K562 (cell line): ENCODE measurements at regions of chr16 and their contacts with region 1.

Region 1: GRCh38 chr16:75622761-75623605 is at the start of gene ADAT1:
- DNase-seq: peak; percentile 87 to 99 (median 91)
- ATAC-seq: peak; percentile 92
- H3K4me3 ChIP-seq: peak within 1 kb of the TSS; percentile 62
- H3K27ac ChIP-seq: peak within 1 kb of the TSS; percentile 92
- H3K4me1 ChIP-seq: peaks cover 28 to 33% of the 10 kb centered on the region in 2 experiments
- H3K27me3 ChIP-seq: no peaks in the 10 kb centered on the region
- CTCF ChIP-seq: no peak
- EP300 ChIP-seq: no peak; the same call in 1 of the 2 replicates
- POLR2A ChIP-seq: peak; percentile 92
- RAD21 ChIP-seq: no peak
- polyA plus RNA-seq, gene ADAT1: 16.0 to 20.6 TPM

Region 2: GRCh38 chr16:75471723-75472633 is 151.0 kb before region 1 on chr16:
- CTCF ChIA-PET with region 1: no interaction called
- POLR2A ChIA-PET with region 1: no interaction called
- in situ Hi-C with region 1: no loop called
- intact Hi-C with region 1: loop called (anchors 2 kb)
- DNase-seq: peak; percentile 71 to 79 (median 73)
- ATAC-seq: peak; percentile 98
- H3K4me3 ChIP-seq: no peak overlapping the region
- H3K27ac ChIP-seq: no peak overlapping the region
- H3K4me1 ChIP-seq: no peaks in the 10 kb centered on the region
- H3K27me3 ChIP-seq: peaks cover 4 to 9% of the 10 kb centered on the region in 2 experiments; a peak in 3 of 5 replicates
- CTCF ChIP-seq: peak; percentile 81 to 86 (median 86)
- EP300 ChIP-seq: no peak
- POLR2A ChIP-seq: no peak
- RAD21 ChIP-seq: peak; percentile 74 to 92

Region 3: DNA sequence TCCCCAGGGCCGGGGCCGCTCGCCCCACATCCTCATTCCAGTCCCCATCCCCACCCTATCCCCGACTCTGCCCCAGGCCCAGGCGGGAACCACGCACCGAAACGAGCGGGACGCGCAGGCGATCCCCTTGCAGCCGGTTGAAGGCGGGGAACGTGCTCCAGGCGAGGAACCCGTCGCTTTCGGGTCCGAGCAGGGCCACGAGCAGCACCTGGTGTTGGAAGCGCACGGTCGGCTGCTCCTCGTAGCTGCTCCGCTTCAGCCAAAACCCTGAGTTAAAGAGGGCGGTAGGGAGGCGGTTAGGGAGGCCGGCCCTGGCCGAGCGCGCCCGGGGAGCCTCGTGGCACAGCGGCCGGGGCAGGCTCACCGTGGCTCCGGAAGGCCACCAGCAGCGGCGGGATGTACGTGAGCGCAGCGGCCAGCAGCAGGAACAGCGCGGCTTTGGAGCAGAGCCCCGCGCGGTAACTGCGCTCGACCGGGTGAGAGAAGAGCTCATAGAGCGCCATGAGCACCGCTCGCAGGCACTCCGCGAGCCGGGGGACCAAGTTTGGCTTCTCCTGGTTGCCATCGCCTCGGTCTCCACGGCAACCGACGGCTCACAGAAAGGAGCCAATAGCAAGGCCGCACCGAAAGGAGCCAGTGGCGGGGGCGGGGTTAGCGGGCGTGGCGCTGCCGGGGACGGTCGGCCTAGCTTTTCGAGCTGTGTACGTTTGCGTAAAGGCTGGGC is 67.1 kb before region 1 on chr16 and contains the start of gene TMEM231:
- CTCF ChIA-PET with region 1: no interaction called
- POLR2A ChIA-PET with region 1: interaction called, 3 read pairs
- in situ Hi-C with region 1: no loop called
- intact Hi-C with region 1: loop called (anchors 1 kb)
- DNase-seq: peak; percentile 95 to 97 (median 97)
- ATAC-seq: peak; percentile 92
- H3K4me3 ChIP-seq: peak within 1 kb of the TSS; percentile 64
- H3K27ac ChIP-seq: peak within 1 kb of the TSS; percentile 66
- H3K4me1 ChIP-seq: peaks cover 17 to 26% of the 10 kb centered on the region in 2 experiments
- H3K27me3 ChIP-seq: no peaks in the 10 kb centered on the region
- CTCF ChIP-seq: no peak
- EP300 ChIP-seq: no peak; the same call in 1 of the 2 replicates
- POLR2A ChIP-seq: peak; percentile 55
- RAD21 ChIP-seq: no peak
- polyA plus RNA-seq, gene TMEM231: 1.6 to 2.8 TPM

Region 4: DNA sequence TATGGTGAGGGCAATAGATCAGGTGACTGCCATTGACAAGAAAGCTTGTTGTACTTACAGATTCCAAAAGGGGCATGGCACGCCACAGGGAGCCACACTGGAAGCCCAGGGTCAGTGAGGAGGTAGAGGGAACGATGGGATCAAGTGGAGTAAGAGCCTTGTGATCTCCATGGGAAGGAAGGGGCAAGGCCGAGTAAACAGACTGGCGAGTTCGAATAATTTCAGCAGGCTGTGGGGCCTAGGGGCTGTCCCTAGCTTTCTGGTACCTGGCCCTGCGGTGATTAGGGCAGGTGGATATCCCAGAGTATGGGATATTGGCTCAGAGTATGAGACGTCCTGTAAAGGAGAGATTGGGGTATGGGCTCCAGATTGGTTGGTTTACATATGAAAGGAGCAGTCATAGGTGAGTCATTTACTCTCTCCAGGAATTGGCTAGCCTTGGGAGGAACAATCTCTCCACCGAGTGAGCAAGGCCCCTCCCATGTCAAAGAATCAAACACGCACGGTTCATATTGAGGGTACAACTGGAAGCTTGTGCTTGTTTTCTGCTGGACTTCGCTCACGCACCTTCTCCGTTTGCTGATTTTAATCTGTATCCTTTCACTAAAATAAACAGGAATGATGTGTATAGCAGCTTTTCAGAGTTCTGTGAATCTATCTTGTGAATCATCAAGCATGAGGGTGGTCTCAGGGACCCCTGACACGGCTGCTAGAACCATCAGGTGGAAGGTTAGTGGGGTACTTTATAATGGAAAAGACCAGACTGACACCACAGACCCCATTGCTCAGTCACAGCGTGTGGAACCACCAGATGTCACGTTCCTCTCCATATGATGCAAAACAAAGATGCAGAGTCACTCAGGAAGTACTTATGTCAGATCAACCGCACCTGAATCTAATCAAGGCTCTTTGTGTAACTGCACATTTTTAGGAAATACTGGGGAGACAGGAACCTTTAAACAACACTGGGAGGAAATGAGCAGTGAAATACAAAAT is 28.9 kb before region 1 on chr16:
- CTCF ChIA-PET with region 1: no interaction called
- POLR2A ChIA-PET with region 1: interaction called, 4 read pairs
- in situ Hi-C with region 1: no loop called
- intact Hi-C with region 1: loop called (anchors 1 kb)
- DNase-seq: peak; percentile 41 to 73 (median 60)
- ATAC-seq: peak; percentile 86
- H3K4me3 ChIP-seq: no peak overlapping the region
- H3K27ac ChIP-seq: peak overlapping the region; percentile 79
- H3K4me1 ChIP-seq: peaks cover 11 to 34% of the 10 kb centered on the region in 2 experiments; a peak in 4 of 5 replicates
- H3K27me3 ChIP-seq: no peaks in the 10 kb centered on the region
- CTCF ChIP-seq: no peak
- EP300 ChIP-seq: peak; percentile 66
- POLR2A ChIP-seq: no peak
- RAD21 ChIP-seq: no peak

Region 5: GRCh38 chr16:75695704-75696103 is 72.7 kb after region 1 on chr16:
- CTCF ChIA-PET with region 1: no interaction called
- POLR2A ChIA-PET with region 1: no interaction called
- in situ Hi-C with region 1: no loop called
- intact Hi-C with region 1: no loop called
- DNase-seq: peak; percentile 37 to 58 (median 50)
- ATAC-seq: peak; percentile 77
- H3K4me3 ChIP-seq: no peak overlapping the region
- H3K27ac ChIP-seq: no peak overlapping the region
- H3K4me1 ChIP-seq: no peaks in the 10 kb centered on the region
- H3K27me3 ChIP-seq: peaks cover 8 to 12% of the 10 kb centered on the region in 2 experiments; a peak in 4 of 5 replicates
- CTCF ChIP-seq: peak; percentile 44 to 50 (median 49); a peak in 5 of 6 replicates
- EP300 ChIP-seq: no peak
- POLR2A ChIP-seq: no peak
- RAD21 ChIP-seq: 0 out of 4 replicates have a peak, but pooled peaks of 1 of the 2 experiments have one; percentile 8